ENCODE measurements at regions of chr12 and their contacts with region 1.

Region 1: GRCh38 chr12:1795785-1796514 is 24.4 kb upstream of the LRTM2 start:
- DNase-seq: peak; percentile 78
- H3K27ac ChIP-seq: no peak overlapping the region
- CTCF ChIP-seq: peak; percentile 84

Region 2: GRCh38 chr12:1634590-1635191 is 161.3 kb before region 1 on chr12:
- CTCF ChIA-PET with region 1: interaction called, 26 read pairs
- POLR2A ChIA-PET with region 1: no interaction called
- DNase-seq: peak; percentile 62
- H3K27ac ChIP-seq: no peak overlapping the region
- CTCF ChIP-seq: peak; percentile 72

Region 3: GRCh38 chr12:1644534-1645438 is 151.2 kb before region 1 on chr12:
- CTCF ChIA-PET with region 1: interaction called, 34 read pairs
- POLR2A ChIA-PET with region 1: no interaction called
- DNase-seq: peak; percentile 34
- H3K27ac ChIP-seq: no peak overlapping the region
- CTCF ChIP-seq: no peak

Region 4: GRCh38 chr12:1655225-1655788 is 140.6 kb before region 1 on chr12:
- CTCF ChIA-PET with region 1: interaction called, 105 read pairs
- POLR2A ChIA-PET with region 1: no interaction called
- DNase-seq: no peak
- H3K27ac ChIP-seq: no peak overlapping the region
- CTCF ChIP-seq: no peak

Region 5: DNA sequence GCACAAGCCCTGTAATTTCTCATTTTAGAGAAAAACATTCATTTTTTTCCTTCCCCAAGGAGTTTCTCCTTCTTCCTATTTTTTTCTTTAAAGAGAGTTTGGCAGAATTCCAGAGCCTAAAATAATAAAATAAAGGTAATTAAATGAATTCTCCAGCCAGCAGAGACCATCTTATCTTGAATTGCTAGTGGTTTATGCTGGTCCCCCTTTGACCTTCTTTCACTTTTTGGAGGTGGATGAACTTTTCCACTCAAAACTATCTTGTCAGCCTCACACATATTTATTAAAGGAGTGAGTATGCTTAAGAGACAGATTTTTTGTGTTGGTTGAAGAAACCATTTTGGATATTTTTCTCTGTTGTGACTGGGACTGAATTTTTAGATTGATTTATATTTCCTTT is 57.5 kb before region 1 on chr12:
- CTCF ChIA-PET with region 1: interaction called, 11 read pairs
- POLR2A ChIA-PET with region 1: no interaction called
- DNase-seq: no peak
- H3K27ac ChIP-seq: no peak overlapping the region
- CTCF ChIP-seq: no peak

Region 6: DNA sequence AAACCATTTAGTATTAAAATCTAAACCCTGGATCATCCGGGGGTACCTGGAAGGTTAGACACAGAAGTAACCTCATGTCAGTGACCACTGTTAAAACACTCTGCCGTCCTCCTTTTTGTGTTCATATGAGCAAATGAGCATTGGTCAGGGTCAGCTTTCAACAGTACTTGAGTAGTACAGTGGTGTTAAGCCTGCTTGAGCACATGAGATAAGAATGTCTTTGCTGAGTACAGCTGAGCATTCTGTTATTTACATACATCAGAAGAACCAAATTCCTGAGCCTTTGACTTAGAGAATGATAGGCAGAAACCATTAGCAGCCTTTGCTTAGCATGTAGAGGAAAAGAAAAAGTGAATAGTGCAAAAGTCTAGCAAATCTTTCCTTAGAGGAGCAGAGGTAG is 14.2 kb before region 1 on chr12:
- CTCF ChIA-PET with region 1: interaction called, 11 read pairs
- POLR2A ChIA-PET with region 1: no interaction called
- DNase-seq: no peak
- H3K27ac ChIP-seq: no peak overlapping the region
- CTCF ChIP-seq: no peak

Region 7: GRCh38 chr12:1939801-1940607 is 144.1 kb after region 1 on chr12:
- CTCF ChIA-PET with region 1: interaction called, 45 read pairs
- POLR2A ChIA-PET with region 1: no interaction called
- DNase-seq: peak; percentile 64
- H3K27ac ChIP-seq: no peak overlapping the region
- CTCF ChIP-seq: peak; percentile 81

Region 8: DNA sequence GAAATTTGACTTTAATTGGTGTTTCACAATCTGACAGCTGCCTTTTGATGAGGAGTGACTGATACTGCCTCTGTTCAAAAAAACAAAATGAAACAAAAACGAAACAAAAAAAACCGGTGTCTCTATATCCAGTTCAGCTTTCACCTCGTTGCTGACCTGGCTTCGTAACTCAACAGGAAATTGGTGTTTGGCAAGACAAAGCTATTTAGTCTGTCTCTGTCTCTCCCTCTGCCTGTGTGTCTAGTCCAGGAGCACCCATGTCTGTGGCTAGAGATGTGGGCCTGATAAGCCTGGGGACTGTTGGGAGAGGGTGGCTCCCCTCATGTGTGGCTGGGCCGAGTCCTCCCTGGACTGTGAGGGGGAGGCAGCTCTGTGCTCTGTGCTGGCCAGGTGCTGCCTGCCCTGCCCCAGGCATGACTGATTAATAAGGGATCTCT is 268.1 kb after region 1 on chr12:
- CTCF ChIA-PET with region 1: no interaction called
- POLR2A ChIA-PET with region 1: no interaction called
- DNase-seq: no peak
- H3K27ac ChIP-seq: no peak overlapping the region
- CTCF ChIP-seq: no peak

Measured in RWPE1 (cell line).